Adrenal gland (tissue), 19 donors: ENCODE measurements at regions of chr14 and their contacts with region 1.

Region 1: DNA sequence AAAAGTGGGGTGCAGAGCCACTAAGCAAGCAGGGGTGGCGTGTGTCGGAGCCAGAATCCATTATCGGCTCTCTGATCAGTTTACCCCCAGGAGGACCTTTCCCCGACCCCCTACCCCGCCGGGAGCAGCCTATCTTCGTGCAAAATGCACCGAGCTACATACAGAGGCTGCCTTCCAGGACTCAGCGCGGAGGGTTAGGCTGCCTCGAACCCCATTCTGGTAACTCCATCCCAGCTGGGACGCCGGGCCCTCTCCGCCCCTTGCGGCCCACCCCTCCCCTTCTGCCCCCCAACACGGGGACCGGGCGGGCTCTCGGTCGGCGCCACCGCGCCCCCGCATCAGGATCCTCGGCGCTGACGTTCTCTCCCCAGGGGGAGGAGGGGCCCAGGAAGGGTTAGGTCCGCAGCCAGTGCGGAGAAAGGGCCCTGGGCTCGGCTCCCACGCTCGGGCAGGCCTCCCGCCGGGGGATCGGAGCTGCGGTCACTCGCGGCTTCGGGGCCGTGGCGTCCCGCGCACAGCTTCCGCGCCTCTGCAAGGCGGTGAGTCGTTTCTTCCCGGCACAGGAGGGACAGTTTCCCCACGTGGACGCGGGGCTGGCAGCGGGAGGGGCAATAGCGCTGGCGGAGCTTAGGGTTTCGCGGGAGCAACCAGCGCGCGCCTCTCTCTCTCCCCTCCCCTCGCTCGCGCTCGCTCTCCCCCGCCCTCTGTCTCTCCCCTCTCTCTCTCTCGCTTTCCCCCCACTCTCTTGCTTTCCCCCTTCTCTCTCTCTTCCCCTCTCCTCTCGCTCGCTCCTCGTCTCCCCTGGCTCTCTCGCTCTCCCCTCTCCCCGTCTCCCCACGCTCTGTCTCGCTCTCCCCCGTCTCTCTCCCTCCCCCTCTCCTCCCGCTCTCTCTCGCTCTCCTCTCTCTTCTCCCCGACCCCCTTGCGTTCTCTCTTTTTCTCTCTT is 12.5 kb upstream of the MAP3K9 start:
- DNase-seq: peak; percentile 64 to 81 (median 69)
- H3K4me3 ChIP-seq: peak overlapping the region; percentile 4 to 85 (median 26)
- H3K27ac ChIP-seq: peak overlapping the region in 1 of 5 donors; percentile 12
- H3K4me1 ChIP-seq: peaks cover 7 to 8% of the 10 kb centered on the region in 2 donors
- H3K27me3 ChIP-seq: no peaks in the 10 kb centered on the region
- CTCF ChIP-seq: no peak
- POLR2A ChIP-seq: peak; percentile 17 to 40

Region 2: DNA sequence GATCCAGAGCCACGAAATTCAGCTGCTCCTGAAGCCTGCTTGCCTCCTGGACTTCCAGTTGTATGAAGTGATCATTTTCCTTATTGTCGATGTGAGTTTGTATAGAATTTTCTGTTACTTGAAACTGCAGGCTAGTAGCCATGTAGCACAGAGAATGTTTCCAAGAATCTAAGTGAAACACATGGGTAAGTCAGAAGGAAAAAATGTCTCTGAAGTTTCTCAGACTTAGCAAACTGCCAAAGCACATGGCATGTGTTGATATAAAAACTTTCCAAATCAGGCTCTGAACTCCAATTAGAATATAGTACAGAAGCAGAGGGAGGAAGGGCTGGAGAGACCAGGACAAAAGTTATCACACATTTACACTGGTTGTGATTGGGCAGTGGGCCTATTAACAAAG is 75.6 kb after region 1 on chr14:
- intact Hi-C with region 1: loop called in 1 of 2 experiments (anchors 10 kb)
- DNase-seq: no peak
- H3K4me3 ChIP-seq: no peak overlapping the region
- H3K27ac ChIP-seq: no peak overlapping the region
- H3K4me1 ChIP-seq: peaks cover 4 to 10% of the 10 kb centered on the region in 2 donors
- H3K27me3 ChIP-seq: no peaks in the 10 kb centered on the region
- CTCF ChIP-seq: no peak
- POLR2A ChIP-seq: no peak

Region 3: DNA sequence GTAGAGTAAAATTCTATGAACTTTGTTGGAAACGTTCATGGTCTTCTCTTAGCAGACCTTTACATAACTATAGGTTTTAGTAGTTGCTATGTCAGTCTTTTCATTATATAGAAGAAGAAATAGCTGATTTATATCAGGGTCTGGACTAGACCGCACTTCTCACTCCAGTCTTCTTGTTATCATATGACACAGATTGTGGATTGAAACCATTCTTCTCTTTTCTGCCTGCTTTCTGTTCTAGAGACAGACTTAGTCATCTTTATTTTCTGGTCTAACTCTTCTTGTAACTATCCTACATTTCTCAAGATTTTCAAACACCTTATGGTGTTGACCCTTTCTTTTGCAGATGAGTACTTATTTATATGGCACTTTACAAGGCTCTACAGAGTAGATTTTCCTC is 141.1 kb after region 1 on chr14:
- intact Hi-C with region 1: loop called in 1 of 2 experiments (anchors 10 kb)
- DNase-seq: no peak
- H3K4me3 ChIP-seq: no peak overlapping the region
- H3K27ac ChIP-seq: no peak overlapping the region
- H3K4me1 ChIP-seq: peaks cover 8 to 33% of the 10 kb centered on the region in 2 donors
- H3K27me3 ChIP-seq: no peaks in the 10 kb centered on the region
- CTCF ChIP-seq: no peak
- POLR2A ChIP-seq: no peak

Region 4: DNA sequence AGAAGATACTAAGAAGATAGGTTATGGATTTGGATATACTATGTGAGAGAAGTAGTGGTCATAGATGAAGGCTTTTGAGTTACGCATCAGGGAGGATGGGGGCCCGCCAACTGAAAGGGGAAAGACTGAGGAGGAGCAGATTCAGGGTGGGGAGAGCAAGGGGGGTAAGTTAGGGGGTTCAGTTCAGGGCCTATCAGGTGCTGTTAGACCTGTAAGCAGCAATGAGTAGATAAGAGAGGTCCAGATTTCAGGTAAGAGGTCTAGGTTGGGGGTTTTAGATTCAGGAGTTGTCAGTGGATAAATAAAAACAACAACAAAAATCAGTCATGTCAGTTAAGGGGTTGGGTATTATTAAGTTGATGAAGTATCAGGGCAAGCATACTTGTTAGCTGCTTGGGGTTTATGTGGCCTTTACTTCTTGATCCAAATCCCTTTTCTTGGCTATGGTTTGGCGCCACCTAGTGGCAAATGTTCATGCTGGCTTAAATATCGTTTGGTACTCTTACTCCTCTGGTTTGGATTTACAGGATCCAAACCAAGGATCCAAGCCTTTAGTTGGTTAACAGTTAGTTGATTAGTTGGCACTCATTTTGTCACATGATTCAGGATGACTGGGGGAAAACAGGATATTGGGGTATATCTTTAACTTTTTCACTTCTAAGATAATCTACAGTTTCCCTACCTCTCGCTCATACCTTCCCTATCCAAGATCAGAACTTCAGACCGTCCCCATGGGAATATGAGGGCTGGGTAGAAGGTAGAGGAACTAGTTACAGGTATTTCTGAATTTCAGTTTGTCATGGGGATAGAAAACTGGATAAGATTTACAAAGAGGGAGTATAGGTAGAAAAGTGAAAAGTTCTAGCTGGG is 150.5 kb after region 1 on chr14:
- intact Hi-C with region 1: loop called (anchors 5 to 10 kb)
- DNase-seq: peak; percentile 73 to 96 (median 88)
- H3K4me3 ChIP-seq: no peak overlapping the region
- H3K27ac ChIP-seq: peak overlapping the region in 2 of 5 donors; percentile 3 to 13
- H3K4me1 ChIP-seq: peaks cover 10 to 12% of the 10 kb centered on the region in 2 donors
- H3K27me3 ChIP-seq: no peaks in the 10 kb centered on the region
- CTCF ChIP-seq: peak; percentile 87 to 98 (median 91)
- POLR2A ChIP-seq: no peak

Region 5: GRCh38 chr14:71117839-71118743 is 296.2 kb after region 1 on chr14:
- intact Hi-C with region 1: no loop called
- DNase-seq: no peak
- H3K4me3 ChIP-seq: no peak overlapping the region
- H3K27ac ChIP-seq: peak overlapping the region in 3 of 5 donors; percentile 25 to 85 (median 72)
- H3K4me1 ChIP-seq: peaks cover 16 to 27% of the 10 kb centered on the region in 2 donors
- H3K27me3 ChIP-seq: no peaks in the 10 kb centered on the region
- CTCF ChIP-seq: no peak
- POLR2A ChIP-seq: no peak